ENCODE measurements at regions of chr9 and their contacts with region 1.

Region 1: DNA sequence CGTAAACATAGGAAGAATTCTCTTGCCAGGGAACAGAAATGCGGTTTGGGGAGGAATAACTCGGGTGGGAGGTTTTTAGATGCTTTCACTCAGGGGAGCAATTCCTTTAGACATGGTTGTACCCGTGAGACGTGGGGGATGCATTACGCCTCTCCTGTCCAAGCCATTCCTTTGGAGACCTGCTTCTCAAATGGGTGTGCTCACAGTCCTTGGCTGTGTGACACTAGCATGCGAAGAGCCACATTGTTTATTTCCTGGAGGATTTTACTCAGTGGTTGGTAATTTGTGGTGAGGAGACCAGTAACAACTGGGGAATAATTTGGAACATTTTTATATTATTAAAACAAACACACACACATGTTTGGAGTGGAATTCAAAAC is 18.5 kb downstream of the COL15A1 start:
- DNase-seq: peak; percentile 49
- H3K4me3 ChIP-seq: no peak overlapping the region
- CTCF ChIP-seq: no peak

Region 2: DNA sequence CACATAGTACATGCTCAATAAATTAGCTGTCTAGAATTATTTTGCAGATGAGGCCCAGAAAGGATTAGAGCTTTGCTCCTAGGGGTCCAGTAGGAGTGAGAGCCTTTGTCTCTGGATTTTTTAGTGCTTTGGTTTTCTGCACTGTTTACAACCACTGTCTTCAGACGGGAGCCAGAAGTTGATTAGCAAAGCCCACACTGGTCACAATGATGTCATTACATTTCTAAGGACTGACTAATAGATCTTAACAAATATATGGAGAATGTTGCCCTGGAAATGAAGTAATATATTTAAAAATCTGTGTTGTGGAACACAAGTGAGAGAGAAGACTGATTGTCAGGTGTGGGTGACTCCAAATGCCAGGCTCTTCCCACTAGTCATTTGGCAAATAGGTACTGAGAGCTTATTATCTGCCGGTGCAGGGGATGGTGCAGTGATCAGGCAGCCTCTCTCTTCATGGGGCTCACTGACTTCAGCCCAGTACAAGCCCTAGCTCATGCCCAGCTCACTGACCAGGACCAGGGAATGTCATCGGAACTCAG is 57.7 kb after region 1 on chr9:
- in situ Hi-C with region 1: loop called (anchors 5 kb)
- DNase-seq: peak; percentile 94
- H3K4me3 ChIP-seq: no peak overlapping the region
- CTCF ChIP-seq: no peak